ENCODE measurements at regions of chr2 and their contacts with region 1.

Region 1: GRCh38 chr2:53767405-53768241 is at the start of gene CHAC2:
- DNase-seq: peak; percentile 87
- H3K4me3 Mint-ChIP-seq: peak within 1 kb of the TSS; percentile 95
- H3K27ac Mint-ChIP-seq: peak within 1 kb of the TSS; percentile 86
- H3K4me1 Mint-ChIP-seq: peaks cover 44% of the 10 kb centered on the region
- H3K27me3 Mint-ChIP-seq: no peaks in the 10 kb centered on the region
- total RNA-seq, gene CHAC2: 9.1 to 10.3 TPM

Region 2: DNA sequence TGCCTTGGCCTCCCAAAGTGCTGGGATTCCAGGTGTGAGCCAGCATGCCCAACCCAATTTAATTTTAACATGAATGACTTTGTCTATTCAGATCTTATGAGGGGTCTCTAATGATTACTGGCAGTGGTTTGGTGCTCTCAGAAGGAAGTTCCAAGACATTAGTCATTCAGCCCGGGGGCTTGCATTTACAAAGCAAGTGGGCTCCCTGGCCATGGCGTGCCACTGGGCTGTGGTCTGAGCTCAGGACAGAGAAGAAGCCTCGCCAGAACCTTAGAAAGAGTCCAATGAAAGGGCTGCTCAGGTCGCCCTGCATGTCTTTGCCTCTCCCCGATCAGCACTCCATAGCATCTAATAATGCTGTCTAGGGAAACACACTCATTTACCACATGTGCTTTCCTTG is 182.6 kb before region 1 on chr2:
- CTCF ChIA-PET with region 1: no interaction called
- POLR2A ChIA-PET with region 1: no interaction called
- DNase-seq: no peak
- H3K4me3 Mint-ChIP-seq: no peak overlapping the region
- H3K27ac Mint-ChIP-seq: no peak overlapping the region
- H3K4me1 Mint-ChIP-seq: no peaks in the 10 kb centered on the region
- H3K27me3 Mint-ChIP-seq: no peaks in the 10 kb centered on the region

Region 3: DNA sequence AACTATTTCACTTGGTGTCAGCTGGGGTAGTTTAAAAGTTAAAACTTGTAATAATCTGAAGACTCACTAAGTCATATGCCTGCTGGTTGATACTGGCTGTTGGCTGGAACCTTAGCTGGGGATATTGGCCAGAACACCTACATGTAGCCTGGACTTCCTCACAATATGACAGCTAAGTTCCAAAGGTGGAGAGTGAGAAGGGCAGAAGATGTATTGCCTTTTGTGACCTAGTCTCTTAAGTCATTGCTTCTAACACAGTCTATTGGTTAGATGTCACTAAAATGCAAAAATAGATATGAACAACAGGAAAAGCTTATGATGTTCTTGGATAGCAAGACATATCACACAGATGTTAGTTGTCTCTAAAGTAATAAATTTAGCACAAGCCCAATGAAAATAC is 113.2 kb before region 1 on chr2:
- CTCF ChIA-PET with region 1: no interaction called
- POLR2A ChIA-PET with region 1: no interaction called
- DNase-seq: no peak
- H3K4me3 Mint-ChIP-seq: no peak overlapping the region
- H3K27ac Mint-ChIP-seq: no peak overlapping the region
- H3K4me1 Mint-ChIP-seq: no peaks in the 10 kb centered on the region
- H3K27me3 Mint-ChIP-seq: no peaks in the 10 kb centered on the region

Region 4: GRCh38 chr2:53751728-53752127 is 15.9 kb before region 1 on chr2:
- CTCF ChIA-PET with region 1: interaction called, 6 read pairs
- POLR2A ChIA-PET with region 1: interaction called, 23 read pairs
- DNase-seq: no peak
- H3K4me3 Mint-ChIP-seq: no peak overlapping the region
- H3K27ac Mint-ChIP-seq: peak overlapping the region; percentile 20
- H3K4me1 Mint-ChIP-seq: peaks cover 29% of the 10 kb centered on the region
- H3K27me3 Mint-ChIP-seq: no peaks in the 10 kb centered on the region

Region 5: GRCh38 chr2:53778536-53779162 is 11.0 kb after region 1 on chr2:
- CTCF ChIA-PET with region 1: interaction called, 13 read pairs
- POLR2A ChIA-PET with region 1: interaction called, 163 read pairs
- DNase-seq: no peak
- H3K4me3 Mint-ChIP-seq: no peak overlapping the region
- H3K27ac Mint-ChIP-seq: no peak overlapping the region
- H3K4me1 Mint-ChIP-seq: peaks cover 18% of the 10 kb centered on the region
- H3K27me3 Mint-ChIP-seq: no peaks in the 10 kb centered on the region

Region 6: DNA sequence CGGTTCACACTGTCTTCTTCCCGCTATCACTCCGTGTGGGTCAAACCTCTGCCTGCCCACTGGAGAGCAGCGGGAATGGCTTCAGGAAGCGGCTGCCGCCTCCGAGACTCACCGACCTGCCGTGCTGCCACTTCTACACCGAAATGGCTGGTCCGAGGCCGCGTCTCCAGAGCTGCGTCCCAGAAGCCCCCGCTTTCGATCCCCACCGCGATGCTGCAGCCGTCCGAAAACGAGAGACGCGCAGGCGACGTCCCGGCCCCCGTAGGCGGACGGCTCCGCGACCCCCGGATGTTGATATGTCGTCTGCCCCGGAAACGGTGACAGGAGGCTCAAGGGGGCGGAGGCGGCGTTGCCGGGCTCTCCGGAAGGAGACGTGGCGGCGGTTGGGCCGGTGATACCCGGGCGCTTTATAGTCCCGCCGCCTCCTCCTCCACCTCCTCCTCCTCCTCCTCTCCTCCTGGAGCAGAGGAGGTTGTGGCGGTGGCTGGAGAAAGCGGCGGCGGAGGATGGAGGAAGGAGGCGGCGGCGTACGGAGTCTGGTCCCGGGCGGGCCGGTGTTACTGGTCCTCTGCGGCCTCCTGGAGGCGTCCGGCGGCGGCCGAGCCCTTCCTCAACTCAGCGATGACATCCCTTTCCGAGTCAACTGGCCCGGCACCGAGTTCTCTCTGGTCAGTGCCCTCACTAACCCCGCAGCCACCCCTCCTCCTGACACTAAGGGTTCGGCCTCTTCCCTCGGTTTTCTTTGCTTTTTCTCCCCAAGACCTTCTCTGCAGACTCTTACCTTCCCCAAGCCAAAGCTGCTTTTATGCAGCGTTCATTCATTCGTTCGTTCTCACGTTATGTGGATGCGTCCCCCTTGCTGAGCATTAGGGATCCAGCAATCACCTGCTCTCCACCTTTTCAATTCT is 19.3 kb after region 1 on chr2 and contains the starts of genes ASB3 and ERLEC1:
- CTCF ChIA-PET with region 1: interaction called, 24 read pairs
- POLR2A ChIA-PET with region 1: interaction called, 163 read pairs
- DNase-seq: peak; percentile 92
- H3K4me3 Mint-ChIP-seq: peak within 1 kb of the TSS; percentile 93
- H3K27ac Mint-ChIP-seq: peak within 1 kb of the TSS; percentile 88
- H3K4me1 Mint-ChIP-seq: peaks cover 51% of the 10 kb centered on the region
- H3K27me3 Mint-ChIP-seq: no peaks in the 10 kb centered on the region
- total RNA-seq, gene ASB3: 27.6 to 29.5 TPM
- total RNA-seq, gene ERLEC1: 32.6 to 33.3 TPM

Region 7: GRCh38 chr2:53826587-53827397 is 59.2 kb after region 1 on chr2:
- CTCF ChIA-PET with region 1: no interaction called
- POLR2A ChIA-PET with region 1: no interaction called
- DNase-seq: no peak
- H3K4me3 Mint-ChIP-seq: no peak overlapping the region
- H3K27ac Mint-ChIP-seq: no peak overlapping the region
- H3K4me1 Mint-ChIP-seq: no peaks in the 10 kb centered on the region
- H3K27me3 Mint-ChIP-seq: no peaks in the 10 kb centered on the region

Region 8: DNA sequence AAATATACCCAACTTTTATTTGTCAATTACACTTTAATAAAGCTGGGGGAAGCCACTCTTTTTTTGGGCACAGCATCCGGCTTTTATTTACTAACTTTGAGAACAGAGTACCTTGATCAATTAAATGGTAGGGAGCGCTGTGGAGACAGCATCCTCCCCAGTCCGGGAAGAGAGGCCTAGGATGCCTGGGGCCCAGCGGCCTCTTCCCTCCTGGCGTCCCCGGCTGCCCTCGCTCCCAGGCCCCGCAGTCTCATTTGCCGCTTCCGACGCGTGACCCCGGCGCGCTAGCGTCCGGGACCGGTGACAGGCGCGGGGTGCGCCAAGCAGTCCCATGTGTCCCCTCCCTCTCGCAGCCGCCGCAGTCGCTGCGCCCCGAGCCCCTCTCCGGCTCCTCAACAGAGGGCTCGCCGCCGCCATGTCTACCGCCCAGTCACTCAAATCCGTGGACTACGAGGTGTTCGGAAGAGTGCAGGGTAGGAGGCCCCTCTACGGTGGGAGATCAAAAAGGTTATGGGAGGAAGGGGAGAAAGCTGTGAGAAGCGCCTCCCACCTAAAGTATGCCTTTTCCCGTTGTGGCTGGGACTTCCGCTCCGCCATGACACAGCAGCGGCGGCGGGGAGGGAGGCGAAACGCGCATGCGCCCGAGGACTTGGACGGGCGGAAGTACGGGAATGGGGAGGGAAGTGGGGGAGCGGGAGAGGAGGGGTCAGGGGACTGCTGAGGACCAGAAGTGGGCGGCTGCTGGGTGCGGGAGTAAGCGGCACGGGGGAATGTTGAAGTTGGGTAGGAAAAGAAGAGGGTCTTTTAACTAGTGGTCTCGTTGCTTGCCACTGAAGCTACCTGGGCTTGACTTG is 347.9 kb after region 1 on chr2 and contains the start of gene ACYP2:
- CTCF ChIA-PET with region 1: interaction called, 3 read pairs
- POLR2A ChIA-PET with region 1: interaction called, 10 read pairs
- DNase-seq: peak; percentile 91
- H3K4me3 Mint-ChIP-seq: peak within 1 kb of the TSS; percentile 92
- H3K27ac Mint-ChIP-seq: peak within 1 kb of the TSS; percentile 97
- H3K4me1 Mint-ChIP-seq: peaks cover 24% of the 10 kb centered on the region
- H3K27me3 Mint-ChIP-seq: no peaks in the 10 kb centered on the region
- total RNA-seq, gene ACYP2: 8.6 to 10.0 TPM